Endothelial cell of umbilical vein (primary cell): ENCODE measurements at regions of chr11 and their contacts with region 1.

Region 1: GRCh38 chr11:103624708-103625623 is 411.5 kb upstream of the DDI1 start:
- DNase-seq: peak; percentile 99
- H3K4me3 ChIP-seq: peak overlapping the region in 1 of 3 experiments; percentile 28
- H3K27ac ChIP-seq: peak overlapping the region; percentile 100
- H3K4me1 ChIP-seq: peaks cover 32% of the 10 kb centered on the region
- H3K27me3 ChIP-seq: no peaks in the 10 kb centered on the region
- CTCF ChIP-seq: no peak
- POLR2A ChIP-seq: peak; percentile 91

Region 2: GRCh38 chr11:102733232-102733875 is 891.6 kb before region 1 on chr11:
- CTCF ChIA-PET with region 1: no interaction called
- POLR2A ChIA-PET with region 1: no interaction called
- dilution Hi-C with region 1: no loop called
- intact Hi-C with region 1: loop called (anchors 2 kb)
- DNase-seq: peak; percentile 64
- H3K4me3 ChIP-seq: no peak overlapping the region
- H3K27ac ChIP-seq: no peak overlapping the region
- H3K4me1 ChIP-seq: peaks cover 26% of the 10 kb centered on the region
- H3K27me3 ChIP-seq: no peaks in the 10 kb centered on the region
- CTCF ChIP-seq: peak; percentile 76 to 89
- POLR2A ChIP-seq: no peak

Region 3: DNA sequence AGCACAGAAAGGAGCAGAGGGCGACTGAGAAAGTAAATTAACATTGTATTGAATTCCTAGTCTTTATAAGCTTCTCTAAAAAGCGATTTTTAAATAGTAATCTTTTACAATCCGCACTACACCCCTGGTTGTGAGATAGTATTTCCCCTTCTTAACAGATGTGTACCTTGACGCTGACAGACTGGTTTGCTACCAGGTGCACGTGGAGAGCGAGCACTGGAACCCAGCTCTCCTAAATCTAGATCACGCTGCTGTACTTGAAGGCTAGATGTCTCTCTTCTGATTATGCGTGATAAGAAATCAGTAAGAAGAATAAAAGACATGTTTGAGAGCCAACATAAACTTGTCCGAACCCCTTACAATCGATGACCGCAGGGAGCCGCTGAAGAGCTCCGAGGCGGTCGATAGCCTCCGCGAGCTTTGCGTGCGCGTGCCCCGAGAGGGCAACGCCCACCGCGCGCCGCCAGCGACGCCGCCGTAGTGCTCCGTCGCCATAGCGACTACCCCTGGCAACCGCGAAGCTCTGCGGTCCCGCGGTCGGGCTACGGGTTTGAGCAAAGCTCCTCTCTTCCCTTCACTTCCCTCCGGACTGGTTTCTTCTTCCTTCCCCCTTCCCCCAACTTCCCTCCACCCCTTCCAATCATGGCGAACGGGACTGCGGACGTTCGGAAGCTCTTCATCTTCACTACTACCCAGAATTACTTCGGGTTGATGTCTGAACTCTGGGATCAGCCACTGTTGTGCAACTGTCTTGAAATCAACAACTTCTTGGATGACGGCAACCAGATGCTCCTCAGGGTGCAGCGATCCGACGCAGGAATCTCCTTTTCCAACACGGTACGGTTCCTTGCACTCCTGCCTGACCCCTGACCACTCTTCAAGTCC is 515.8 kb before region 1 on chr11 and contains the start of gene DYNC2H1:
- CTCF ChIA-PET with region 1: no interaction called
- POLR2A ChIA-PET with region 1: no interaction called
- dilution Hi-C with region 1: no loop called
- intact Hi-C with region 1: loop called (anchors 5 kb)
- DNase-seq: peak; percentile 92
- H3K4me3 ChIP-seq: peak within 1 kb of the TSS; percentile 21 to 73 (median 71)
- H3K27ac ChIP-seq: no peak within 1 kb of the TSS
- H3K4me1 ChIP-seq: peaks cover 6% of the 10 kb centered on the region
- H3K27me3 ChIP-seq: peaks cover 7 to 15% of the 10 kb centered on the region in 2 experiments
- CTCF ChIP-seq: peak; percentile 39 to 66
- POLR2A ChIP-seq: peak; percentile 41
- total RNA-seq, gene DYNC2H1: 4.2 and 5.7 TPM in 2 replicates

Region 4: GRCh38 chr11:103338621-103339484 is 286.1 kb before region 1 on chr11:
- CTCF ChIA-PET with region 1: no interaction called
- POLR2A ChIA-PET with region 1: no interaction called
- dilution Hi-C with region 1: no loop called
- intact Hi-C with region 1: no loop called
- DNase-seq: peak; percentile 28
- H3K4me3 ChIP-seq: no peak overlapping the region
- H3K27ac ChIP-seq: no peak overlapping the region
- H3K4me1 ChIP-seq: peaks cover 2% of the 10 kb centered on the region
- H3K27me3 ChIP-seq: no peaks in the 10 kb centered on the region
- CTCF ChIP-seq: peak; percentile 30 to 41
- POLR2A ChIP-seq: no peak

Region 5: GRCh38 chr11:103586756-103587155 is 38.2 kb before region 1 on chr11:
- CTCF ChIA-PET with region 1: no interaction called
- POLR2A ChIA-PET with region 1: no interaction called
- dilution Hi-C with region 1: no loop called
- intact Hi-C with region 1: loop called (anchors 1 kb)
- DNase-seq: peak; percentile 55
- H3K4me3 ChIP-seq: no peak overlapping the region
- H3K27ac ChIP-seq: peak overlapping the region; percentile 88
- H3K4me1 ChIP-seq: peaks cover 44% of the 10 kb centered on the region
- H3K27me3 ChIP-seq: no peaks in the 10 kb centered on the region
- CTCF ChIP-seq: no peak
- POLR2A ChIP-seq: no peak

Region 6: DNA sequence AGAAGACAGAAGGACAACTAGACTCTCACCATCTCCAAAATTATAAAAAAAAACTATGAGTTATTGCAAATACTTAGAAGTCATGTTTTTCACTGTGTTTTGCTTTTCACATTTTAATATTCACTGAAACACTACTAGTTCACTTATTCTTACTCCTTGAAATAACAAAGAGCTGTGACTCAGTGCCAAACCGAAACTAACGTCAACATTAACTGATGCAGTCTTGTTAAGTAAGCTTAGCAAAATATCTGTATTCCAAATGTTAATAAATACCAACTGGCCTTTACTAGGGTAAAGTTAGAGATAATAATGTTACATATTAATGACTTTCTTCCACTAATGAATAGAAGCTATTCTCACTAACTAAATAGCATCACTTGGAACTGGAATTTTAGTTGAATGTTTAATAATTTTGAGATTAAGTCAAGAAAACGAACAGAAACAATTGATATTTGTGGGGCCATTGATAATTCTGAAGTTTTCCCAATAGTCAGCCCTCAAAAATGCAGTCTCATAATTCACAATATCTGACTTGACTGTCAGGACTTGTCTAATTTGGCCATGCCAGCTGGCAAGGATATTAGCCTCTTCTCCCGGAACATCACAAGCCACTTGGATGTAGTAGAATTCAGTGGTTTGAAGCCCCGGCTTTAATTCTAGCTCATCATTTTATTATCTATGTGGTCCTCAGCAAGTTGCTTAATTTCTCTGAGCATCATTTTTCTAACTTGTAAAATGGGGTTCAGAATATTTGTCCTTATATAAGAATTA is 181.3 kb after region 1 on chr11:
- CTCF ChIA-PET with region 1: no interaction called
- POLR2A ChIA-PET with region 1: no interaction called
- dilution Hi-C with region 1: no loop called
- intact Hi-C with region 1: loop called (anchors 10 kb)
- DNase-seq: peak; percentile 86
- H3K4me3 ChIP-seq: peak overlapping the region in 1 of 3 experiments; percentile 34
- H3K27ac ChIP-seq: no peak overlapping the region
- H3K4me1 ChIP-seq: peaks cover 9% of the 10 kb centered on the region
- H3K27me3 ChIP-seq: no peaks in the 10 kb centered on the region
- CTCF ChIP-seq: no peak
- POLR2A ChIP-seq: no peak

Region 7: GRCh38 chr11:104897891-104898684 is 1273.1 kb after region 1 on chr11 and contains the start of gene CASP12:
- CTCF ChIA-PET with region 1: no interaction called
- POLR2A ChIA-PET with region 1: no interaction called
- dilution Hi-C with region 1: no loop called
- intact Hi-C with region 1: loop called (anchors 1 kb)
- DNase-seq: peak; percentile 97
- H3K4me3 ChIP-seq: peak within 1 kb of the TSS in 2 of 3 experiments; percentile 23 to 41
- H3K27ac ChIP-seq: peak within 1 kb of the TSS; percentile 74
- H3K4me1 ChIP-seq: peaks cover 30% of the 10 kb centered on the region
- H3K27me3 ChIP-seq: no peaks in the 10 kb centered on the region
- CTCF ChIP-seq: no peak
- POLR2A ChIP-seq: peak; percentile 14
- total RNA-seq, gene CASP12: 2.6 and 3.9 TPM in 2 replicates